ENCODE measurements at regions of chr5 and their contacts with region 1.

Region 1: GRCh38 chr5:126801992-126802294 is 25.0 kb downstream of the LMNB1 start:
- DNase-seq: peak; percentile 26
- CTCF ChIP-seq: peak; percentile 51

Region 2: DNA sequence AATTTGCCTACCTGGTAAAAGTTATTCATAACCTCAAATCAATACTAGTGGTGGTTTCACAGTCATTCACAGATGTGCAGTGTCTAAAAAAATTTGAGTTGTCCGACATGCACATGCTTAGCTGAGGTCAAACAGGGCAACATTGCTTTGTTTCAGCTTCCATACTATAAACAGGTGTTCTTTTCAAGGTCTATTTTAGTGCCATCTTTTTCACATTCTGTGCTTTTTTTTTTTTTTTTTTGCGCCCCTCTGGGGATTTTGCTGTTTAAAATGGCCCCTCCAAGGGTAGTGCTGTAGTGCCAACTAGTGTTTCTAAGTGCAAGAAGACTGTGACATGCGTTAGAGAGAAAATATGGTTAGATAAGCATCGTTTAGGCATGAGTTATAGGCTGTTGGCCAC is 186.7 kb before region 1 on chr5:
- CTCF ChIA-PET with region 1: no interaction called
- POLR2A ChIA-PET with region 1: no interaction called
- DNase-seq: peak; percentile 47
- CTCF ChIP-seq: no peak

Region 3: DNA sequence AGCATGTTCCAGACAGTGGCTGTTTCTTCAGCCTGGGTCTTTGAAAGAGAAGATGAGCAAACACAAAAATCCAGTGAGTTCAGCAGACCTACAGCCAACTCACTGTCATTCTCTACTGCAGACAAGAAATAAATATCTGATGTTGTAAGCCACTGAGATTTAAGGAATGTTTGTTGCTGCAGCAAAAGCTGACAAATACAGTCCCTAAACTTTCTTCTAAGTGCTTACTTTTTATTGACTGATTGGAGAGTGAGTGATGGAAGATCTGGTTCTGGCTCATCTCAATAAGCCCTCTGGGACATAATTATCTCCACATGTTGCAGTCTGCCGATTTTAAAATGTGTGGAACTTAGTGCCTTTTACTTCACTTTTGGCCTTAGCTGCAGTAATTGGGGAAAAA is 94.9 kb before region 1 on chr5:
- CTCF ChIA-PET with region 1: no interaction called
- POLR2A ChIA-PET with region 1: no interaction called
- DNase-seq: no peak
- CTCF ChIP-seq: no peak

Region 4: GRCh38 chr5:126753227-126753626 is 48.7 kb before region 1 on chr5:
- CTCF ChIA-PET with region 1: no interaction called
- POLR2A ChIA-PET with region 1: no interaction called
- DNase-seq: no peak
- CTCF ChIP-seq: no peak

Region 5: GRCh38 chr5:126814721-126815404 is 12.9 kb after region 1 on chr5:
- CTCF ChIA-PET with region 1: interaction called, 14 read pairs
- POLR2A ChIA-PET with region 1: no interaction called
- DNase-seq: no peak
- CTCF ChIP-seq: no peak